ENCODE measurements at regions of chr12 and their contacts with region 1.

Region 1: GRCh38 chr12:80400571-80400991 is 43.5 kb upstream of the PTPRQ start:
- DNase-seq: no peak
- ATAC-seq: no peak
- H3K4me3 ChIP-seq: no peak overlapping the region
- H3K27ac ChIP-seq: no peak overlapping the region
- H3K4me1 ChIP-seq: no peaks in the 10 kb centered on the region
- H3K27me3 ChIP-seq: no peaks in the 10 kb centered on the region; a peak in 1 of 5 replicates
- CTCF ChIP-seq: no peak
- EP300 ChIP-seq: no peak
- POLR2A ChIP-seq: no peak
- RAD21 ChIP-seq: no peak

Region 2: GRCh38 chr12:80195074-80195726 is 205.4 kb before region 1 on chr12:
- CTCF ChIA-PET with region 1: no interaction called
- POLR2A ChIA-PET with region 1: no interaction called
- in situ Hi-C with region 1: no loop called
- intact Hi-C with region 1: no loop called
- DNase-seq: peak; percentile 16
- ATAC-seq: peak; percentile 82
- H3K4me3 ChIP-seq: no peak overlapping the region
- H3K27ac ChIP-seq: no peak overlapping the region
- H3K4me1 ChIP-seq: no peaks in the 10 kb centered on the region
- H3K27me3 ChIP-seq: no peaks in the 10 kb centered on the region
- CTCF ChIP-seq: peak; percentile 38
- EP300 ChIP-seq: no peak
- POLR2A ChIP-seq: no peak
- RAD21 ChIP-seq: no peak

Region 3: GRCh38 chr12:80332827-80333226 is 67.8 kb before region 1 on chr12:
- CTCF ChIA-PET with region 1: no interaction called
- POLR2A ChIA-PET with region 1: no interaction called
- in situ Hi-C with region 1: no loop called
- intact Hi-C with region 1: no loop called
- DNase-seq: no peak
- ATAC-seq: no peak
- H3K4me3 ChIP-seq: no peak overlapping the region
- H3K27ac ChIP-seq: no peak overlapping the region
- H3K4me1 ChIP-seq: no peaks in the 10 kb centered on the region
- H3K27me3 ChIP-seq: no peaks in the 10 kb centered on the region
- CTCF ChIP-seq: no peak
- EP300 ChIP-seq: no peak
- POLR2A ChIP-seq: no peak
- RAD21 ChIP-seq: no peak

Region 4: DNA sequence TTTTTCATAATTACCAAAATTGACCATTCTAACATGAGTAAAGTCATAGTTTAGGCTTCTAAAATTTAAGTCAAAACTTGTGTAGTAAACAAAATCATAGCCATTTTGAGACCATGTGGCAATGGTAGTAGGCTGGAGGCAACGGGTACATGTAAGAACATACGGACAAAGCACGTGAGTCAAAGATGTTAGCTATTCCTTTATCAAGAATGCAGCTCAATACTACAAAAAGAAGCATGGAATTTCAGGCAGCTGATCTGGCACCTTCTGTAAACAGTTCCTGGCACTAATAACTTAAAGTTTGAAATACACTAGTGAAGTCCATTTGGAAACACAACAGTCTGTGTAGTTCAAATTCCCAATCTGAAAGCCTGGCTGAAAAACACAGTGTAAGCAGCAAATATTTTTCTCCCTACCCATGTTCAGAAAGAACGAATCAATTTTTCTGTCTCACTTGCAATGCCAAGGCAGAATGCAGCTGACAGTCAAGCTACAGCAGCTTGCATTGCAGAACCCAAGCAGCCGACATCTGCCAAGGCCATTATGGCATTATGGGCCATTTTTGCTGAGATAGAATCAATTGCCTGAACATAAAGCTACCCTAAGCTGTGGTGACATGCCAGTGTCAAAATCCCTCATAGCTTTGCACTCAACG is 345.4 kb after region 1 on chr12:
- CTCF ChIA-PET with region 1: no interaction called
- POLR2A ChIA-PET with region 1: no interaction called
- in situ Hi-C with region 1: loop called (anchors 10 kb)
- intact Hi-C with region 1: no loop called
- DNase-seq: no peak
- ATAC-seq: no peak
- H3K4me3 ChIP-seq: no peak overlapping the region
- H3K27ac ChIP-seq: no peak overlapping the region
- H3K4me1 ChIP-seq: no peaks in the 10 kb centered on the region
- H3K27me3 ChIP-seq: no peaks in the 10 kb centered on the region; a peak in 1 of 5 replicates
- CTCF ChIP-seq: no peak
- EP300 ChIP-seq: no peak
- POLR2A ChIP-seq: no peak
- RAD21 ChIP-seq: no peak

Measured in HepG2 (cell line).